Naive thymus-derived CD4-positive, alpha-beta T cell (primary cell): ENCODE measurements at regions of chr22 and their contacts with region 1.

Region 1: GRCh38 chr22:36486619-36487384 is 5.4 kb upstream of the TXN2 start:
- DNase-seq: peak; percentile 33 to 71 (median 59)
- ATAC-seq: no peak
- H3K4me3 ChIP-seq: no peak overlapping the region
- H3K4me3 Mint-ChIP-seq: no peak overlapping the region
- H3K27ac ChIP-seq: no peak overlapping the region
- H3K27ac Mint-ChIP-seq: peak overlapping the region in 1 of 9 donors; percentile 69
- H3K4me1 ChIP-seq: peaks cover 0 to 4% of the 10 kb centered on the region in 2 donors
- H3K4me1 Mint-ChIP-seq: peaks cover 4 to 15% (median 7%) of the 10 kb centered on the region in 7 donors
- H3K27me3 ChIP-seq: no peaks in the 10 kb centered on the region
- H3K27me3 Mint-ChIP-seq: no peaks in the 10 kb centered on the region

Region 2: GRCh38 chr22:36301384-36301828 is 185.4 kb before region 1 on chr22:
- CTCF ChIA-PET with region 1: interaction called, 18 read pairs
- POLR2A ChIA-PET with region 1: interaction called, 7 read pairs
- intact Hi-C with region 1: loop called in 1 of 2 experiments (anchors 1 kb)
- DNase-seq: peak; percentile 68 to 86 (median 80)
- ATAC-seq: peak; percentile 94
- H3K4me3 ChIP-seq: no peak overlapping the region
- H3K4me3 Mint-ChIP-seq: peak overlapping the region in 3 of 10 donors; percentile 6 to 40 (median 26)
- H3K27ac ChIP-seq: peak overlapping the region; percentile 15
- H3K27ac Mint-ChIP-seq: peak overlapping the region; percentile 56 to 81 (median 76)
- H3K4me1 ChIP-seq: peaks cover 0 to 3% of the 10 kb centered on the region in 2 donors
- H3K4me1 Mint-ChIP-seq: peaks cover 4 to 14% (median 11%) of the 10 kb centered on the region in 7 donors
- H3K27me3 ChIP-seq: no peaks in the 10 kb centered on the region
- H3K27me3 Mint-ChIP-seq: no peaks in the 10 kb centered on the region

Region 3: DNA sequence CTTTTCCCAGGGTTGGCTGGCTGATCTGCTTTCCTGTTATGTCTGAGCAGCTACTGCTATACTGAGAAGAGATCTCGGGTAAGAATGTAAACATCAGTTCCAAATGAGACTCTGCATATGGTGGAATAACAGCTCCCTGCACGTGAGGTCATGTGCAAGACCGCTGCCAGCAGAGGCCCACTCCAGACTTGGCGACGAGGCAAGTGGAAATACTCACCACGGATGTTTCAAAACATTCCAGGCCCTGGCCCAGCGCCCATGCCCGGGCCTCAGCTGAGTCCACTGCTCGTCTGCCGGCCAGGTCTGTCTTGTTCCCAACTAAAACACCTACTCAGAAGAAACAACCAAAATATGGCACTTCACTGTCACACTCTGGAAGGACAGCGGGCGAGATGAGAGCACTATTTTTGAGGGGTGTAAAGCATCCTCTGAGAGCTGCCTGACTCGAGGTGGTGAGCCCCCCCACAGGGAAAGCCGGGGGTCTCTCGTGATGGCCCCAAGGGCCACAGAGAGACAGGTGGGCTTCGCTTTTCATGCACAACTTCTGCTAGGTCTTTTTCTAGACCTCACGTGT is 276.0 kb after region 1 on chr22:
- CTCF ChIA-PET with region 1: no interaction called
- POLR2A ChIA-PET with region 1: no interaction called
- intact Hi-C with region 1: no loop called
- DNase-seq: no peak
- ATAC-seq: no peak
- H3K4me3 ChIP-seq: no peak overlapping the region
- H3K4me3 Mint-ChIP-seq: no peak overlapping the region
- H3K27ac ChIP-seq: no peak overlapping the region
- H3K27ac Mint-ChIP-seq: no peak overlapping the region
- H3K4me1 ChIP-seq: no peaks in the 10 kb centered on the region
- H3K4me1 Mint-ChIP-seq: peaks cover 0 to 1% (median 0%) of the 10 kb centered on the region in 7 donors
- H3K27me3 ChIP-seq: no peaks in the 10 kb centered on the region
- H3K27me3 Mint-ChIP-seq: no peaks in the 10 kb centered on the region